ENCODE measurements at regions of chr1 and their contacts with region 1.

Region 1: DNA sequence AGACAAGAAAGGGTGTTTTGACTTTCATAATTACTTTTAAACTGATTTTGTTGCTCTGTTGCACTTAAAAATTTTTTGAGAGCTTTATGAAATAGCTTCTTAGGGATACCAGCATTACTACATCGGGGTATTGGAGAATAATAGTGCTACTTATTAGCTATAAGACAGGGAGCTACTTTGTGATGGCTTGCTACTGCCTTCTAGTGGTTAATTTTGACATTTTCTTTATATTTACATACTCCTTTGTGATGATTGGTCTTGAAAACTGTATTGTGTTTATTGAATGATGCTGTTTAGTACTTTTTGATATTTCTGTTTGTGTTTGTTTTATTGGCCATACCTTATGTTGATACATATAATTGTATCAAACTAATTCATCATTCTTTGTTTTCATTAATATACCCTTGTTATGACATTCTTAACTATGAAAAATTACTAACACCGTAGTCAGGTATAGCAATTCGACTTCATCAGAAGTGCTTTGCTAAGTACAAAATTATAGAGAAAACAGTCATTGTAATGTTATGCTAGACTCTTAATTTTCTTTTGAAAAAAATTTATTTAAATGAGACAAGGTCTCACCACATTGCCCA is 85.5 kb downstream of the CLIC4 start:
- DNase-seq: peak in 2 of 5 donors; percentile 82 to 85
- H3K4me3 ChIP-seq: no peak overlapping the region
- H3K27ac ChIP-seq: no peak overlapping the region
- H3K4me1 ChIP-seq: peaks cover 2 to 10% (median 2%) of the 10 kb centered on the region in 3 donors
- H3K27me3 ChIP-seq: no peaks in the 10 kb centered on the region
- CTCF ChIP-seq: peak; percentile 65

Region 2: DNA sequence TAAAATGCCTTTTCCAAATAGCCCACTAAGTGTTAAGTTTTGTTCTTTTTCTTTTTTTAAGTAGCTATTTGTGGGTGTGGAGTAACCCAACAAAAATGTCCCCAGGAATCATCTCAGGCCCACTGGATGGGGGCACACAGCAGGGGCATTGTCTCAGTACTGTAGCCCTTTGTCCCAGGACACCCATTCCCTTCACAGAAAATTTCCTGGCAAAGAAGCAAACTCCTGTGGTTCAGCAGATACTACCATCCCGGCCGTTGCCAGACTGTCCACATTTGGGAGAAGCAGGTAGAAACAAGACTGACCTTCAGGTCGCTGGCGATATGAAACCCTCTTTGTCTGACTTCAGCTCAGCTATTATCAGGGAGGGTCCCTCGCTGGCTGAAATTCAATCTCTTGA is 211.4 kb before region 1 on chr1:
- intact Hi-C with region 1: no loop called
- DNase-seq: no peak
- H3K4me3 ChIP-seq: no peak overlapping the region
- H3K27ac ChIP-seq: no peak overlapping the region
- H3K4me1 ChIP-seq: no peaks in the 10 kb centered on the region
- H3K27me3 ChIP-seq: no peaks in the 10 kb centered on the region
- CTCF ChIP-seq: no peak

Region 3: GRCh38 chr1:24683713-24684162 is 147.0 kb before region 1 on chr1:
- intact Hi-C with region 1: loop called (anchors 5 kb)
- DNase-seq: no peak
- H3K4me3 ChIP-seq: no peak overlapping the region
- H3K27ac ChIP-seq: no peak overlapping the region
- H3K4me1 ChIP-seq: peaks cover 0 to 1% (median 0%) of the 10 kb centered on the region in 3 donors
- H3K27me3 ChIP-seq: no peaks in the 10 kb centered on the region
- CTCF ChIP-seq: no peak

Region 4: GRCh38 chr1:24955161-24955560 is 124.4 kb after region 1 on chr1:
- intact Hi-C with region 1: no loop called
- DNase-seq: no peak
- H3K4me3 ChIP-seq: no peak overlapping the region
- H3K27ac ChIP-seq: no peak overlapping the region
- H3K4me1 ChIP-seq: no peaks in the 10 kb centered on the region
- H3K27me3 ChIP-seq: no peaks in the 10 kb centered on the region
- CTCF ChIP-seq: no peak

Region 5: GRCh38 chr1:25068829-25069228 is 238.1 kb after region 1 on chr1:
- intact Hi-C with region 1: no loop called
- DNase-seq: no peak
- H3K4me3 ChIP-seq: no peak overlapping the region
- H3K27ac ChIP-seq: no peak overlapping the region
- H3K4me1 ChIP-seq: no peaks in the 10 kb centered on the region
- H3K27me3 ChIP-seq: no peaks in the 10 kb centered on the region
- CTCF ChIP-seq: no peak